Naive thymus-derived CD4-positive, alpha-beta T cell (primary cell): ENCODE measurements at regions of chr17 and their contacts with region 1.

Region 1: GRCh38 chr17:66301797-66302741 is at the start of gene PRKCA:
- DNase-seq: peak; percentile 59 to 85 (median 71)
- ATAC-seq: peak; percentile 91
- H3K4me3 ChIP-seq: peak within 1 kb of the TSS; percentile 61
- H3K4me3 Mint-ChIP-seq: peak within 1 kb of the TSS; percentile 96 to 100 (median 99)
- H3K27ac ChIP-seq: peak within 1 kb of the TSS; percentile 75
- H3K27ac Mint-ChIP-seq: peak within 1 kb of the TSS; percentile 92 to 98 (median 96)
- H3K4me1 ChIP-seq: peaks cover 7 to 21% of the 10 kb centered on the region in 2 donors
- H3K4me1 Mint-ChIP-seq: peaks cover 29 to 68% (median 59%) of the 10 kb centered on the region in 7 donors
- H3K27me3 ChIP-seq: no peaks in the 10 kb centered on the region
- H3K27me3 Mint-ChIP-seq: peaks cover 0 to 9% (median 0%) of the 10 kb centered on the region in 5 donors
- total RNA-seq, gene PRKCA: 94.1 to 186 (median 154) TPM

Region 2: GRCh38 chr17:65561394-65562205 is 740.5 kb before region 1 on chr17 and contains the start of gene AXIN2:
- CTCF ChIA-PET with region 1: no interaction called
- POLR2A ChIA-PET with region 1: no interaction called
- intact Hi-C with region 1: loop called in 1 of 2 experiments (anchors 5 kb)
- DNase-seq: peak; percentile 70 to 91 (median 88)
- ATAC-seq: peak; percentile 91
- H3K4me3 ChIP-seq: peak within 1 kb of the TSS; percentile 70
- H3K4me3 Mint-ChIP-seq: peak within 1 kb of the TSS in 8 of 10 donors; percentile 79 to 94 (median 87)
- H3K27ac ChIP-seq: peak within 1 kb of the TSS; percentile 92
- H3K27ac Mint-ChIP-seq: peak within 1 kb of the TSS; percentile 70 to 93 (median 90)
- H3K4me1 ChIP-seq: peaks cover 18 to 24% of the 10 kb centered on the region in 2 donors
- H3K4me1 Mint-ChIP-seq: peaks cover 10 to 37% (median 31%) of the 10 kb centered on the region in 7 donors
- H3K27me3 ChIP-seq: no peaks in the 10 kb centered on the region
- H3K27me3 Mint-ChIP-seq: peaks cover 0 to 22% (median 0%) of the 10 kb centered on the region in 5 donors
- total RNA-seq, gene AXIN2: 7.4 to 63.4 (median 39.5) TPM

Region 3: GRCh38 chr17:66200685-66201092 is 101.4 kb before region 1 on chr17:
- CTCF ChIA-PET with region 1: interaction called, 3 read pairs
- POLR2A ChIA-PET with region 1: no interaction called
- intact Hi-C with region 1: loop called in 1 of 2 experiments (anchors 5 kb)
- DNase-seq: peak in 7 of 9 donors; percentile 20 to 57 (median 55)
- ATAC-seq: peak; percentile 66
- H3K4me3 ChIP-seq: no peak overlapping the region
- H3K4me3 Mint-ChIP-seq: peak overlapping the region in 6 of 10 donors; percentile 21 to 66 (median 44)
- H3K27ac ChIP-seq: no peak overlapping the region
- H3K27ac Mint-ChIP-seq: peak overlapping the region in 8 of 9 donors; percentile 25 to 89 (median 69)
- H3K4me1 ChIP-seq: peaks cover 0 to 17% of the 10 kb centered on the region in 2 donors
- H3K4me1 Mint-ChIP-seq: peaks cover 12 to 26% (median 21%) of the 10 kb centered on the region in 7 donors
- H3K27me3 ChIP-seq: no peaks in the 10 kb centered on the region
- H3K27me3 Mint-ChIP-seq: peaks cover 0 to 4% (median 0%) of the 10 kb centered on the region in 5 donors

Region 4: GRCh38 chr17:66290101-66290722 is 11.9 kb before region 1 on chr17:
- CTCF ChIA-PET with region 1: interaction called, 3 read pairs
- POLR2A ChIA-PET with region 1: interaction called, 22 read pairs
- intact Hi-C with region 1: loop called in 1 of 2 experiments (anchors 1 kb)
- DNase-seq: no peak
- ATAC-seq: no peak
- H3K4me3 ChIP-seq: no peak overlapping the region
- H3K4me3 Mint-ChIP-seq: peak overlapping the region in 2 of 10 donors; percentile 11 to 59
- H3K27ac ChIP-seq: no peak overlapping the region
- H3K27ac Mint-ChIP-seq: peak overlapping the region in 1 of 9 donors; percentile 63
- H3K4me1 ChIP-seq: peaks cover 6 to 30% of the 10 kb centered on the region in 2 donors
- H3K4me1 Mint-ChIP-seq: peaks cover 18 to 51% (median 34%) of the 10 kb centered on the region in 7 donors
- H3K27me3 ChIP-seq: no peaks in the 10 kb centered on the region
- H3K27me3 Mint-ChIP-seq: no peaks in the 10 kb centered on the region

Region 5: DNA sequence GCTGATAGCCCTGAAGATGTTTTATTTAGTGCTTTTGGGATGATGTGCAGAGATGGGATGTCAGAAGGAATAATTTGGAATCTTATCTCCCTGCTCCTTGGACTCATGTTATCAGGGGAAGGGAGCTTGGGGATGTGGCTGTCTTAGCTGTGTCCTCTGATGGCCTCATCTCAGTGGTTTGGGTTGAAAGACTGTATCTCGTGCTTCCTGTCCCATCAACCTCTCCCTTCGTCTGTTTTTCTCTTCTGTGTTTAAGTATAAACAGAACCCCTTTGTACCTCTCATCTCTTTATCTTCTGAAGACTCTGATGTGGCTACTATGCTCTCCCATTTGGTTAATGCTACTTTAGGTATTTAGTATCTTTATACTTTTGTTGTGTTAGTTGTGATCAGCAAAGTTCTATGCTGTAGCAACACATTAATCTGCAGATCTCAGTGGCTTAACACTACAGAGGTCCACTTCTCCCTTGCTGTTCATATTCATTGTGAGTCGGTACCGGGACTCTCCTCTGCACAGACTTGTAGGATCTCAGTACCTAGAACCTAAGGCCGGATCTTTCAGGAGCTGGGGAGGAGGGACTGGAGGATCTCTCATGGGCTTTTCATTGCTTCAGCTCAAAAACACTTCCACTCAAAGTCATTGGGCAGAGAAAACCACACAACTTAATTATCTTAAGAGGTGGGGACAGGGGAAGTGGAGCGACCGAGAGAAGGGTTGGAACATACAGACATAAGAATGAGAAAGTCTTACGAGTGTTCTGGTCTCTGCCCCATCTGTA is 29.2 kb after region 1 on chr17:
- CTCF ChIA-PET with region 1: interaction called, 6 read pairs
- POLR2A ChIA-PET with region 1: interaction called, 22 read pairs
- intact Hi-C with region 1: loop called (anchors 1 kb)
- DNase-seq: peak in 8 of 9 donors; percentile 32 to 88 (median 76)
- ATAC-seq: peak; percentile 91
- H3K4me3 ChIP-seq: peak overlapping the region; percentile 6
- H3K4me3 Mint-ChIP-seq: peak overlapping the region; percentile 68 to 92 (median 83)
- H3K27ac ChIP-seq: peak overlapping the region; percentile 69
- H3K27ac Mint-ChIP-seq: peak overlapping the region; percentile 88 to 99 (median 95)
- H3K4me1 ChIP-seq: peaks cover 0 to 91% of the 10 kb centered on the region in 2 donors
- H3K4me1 Mint-ChIP-seq: peaks cover 43 to 92% (median 81%) of the 10 kb centered on the region in 7 donors
- H3K27me3 ChIP-seq: no peaks in the 10 kb centered on the region
- H3K27me3 Mint-ChIP-seq: no peaks in the 10 kb centered on the region

Region 6: GRCh38 chr17:66403846-66404556 is 101.9 kb after region 1 on chr17:
- CTCF ChIA-PET with region 1: interaction called, 8 read pairs
- POLR2A ChIA-PET with region 1: interaction called, 4 read pairs
- intact Hi-C with region 1: loop called (anchors 2 kb)
- DNase-seq: peak in 2 of 9 donors; percentile 20
- ATAC-seq: no peak
- H3K4me3 ChIP-seq: no peak overlapping the region
- H3K4me3 Mint-ChIP-seq: peak overlapping the region; percentile 67 to 85 (median 72)
- H3K27ac ChIP-seq: peak overlapping the region; percentile 14
- H3K27ac Mint-ChIP-seq: peak overlapping the region; percentile 58 to 97 (median 89)
- H3K4me1 ChIP-seq: peaks cover 14 to 82% of the 10 kb centered on the region in 2 donors
- H3K4me1 Mint-ChIP-seq: peaks cover 69 to 96% (median 90%) of the 10 kb centered on the region in 7 donors
- H3K27me3 ChIP-seq: no peaks in the 10 kb centered on the region
- H3K27me3 Mint-ChIP-seq: no peaks in the 10 kb centered on the region

Region 7: GRCh38 chr17:66567234-66568170 is 265.4 kb after region 1 on chr17:
- CTCF ChIA-PET with region 1: interaction called, 3 read pairs
- POLR2A ChIA-PET with region 1: no interaction called
- intact Hi-C with region 1: loop called in 1 of 2 experiments (anchors 5 kb)
- DNase-seq: peak; percentile 30 to 76 (median 65)
- ATAC-seq: peak; percentile 87
- H3K4me3 ChIP-seq: no peak overlapping the region
- H3K4me3 Mint-ChIP-seq: no peak overlapping the region
- H3K27ac ChIP-seq: no peak overlapping the region
- H3K27ac Mint-ChIP-seq: peak overlapping the region in 7 of 9 donors; percentile 3 to 87 (median 23)
- H3K4me1 ChIP-seq: peaks cover 0 to 14% of the 10 kb centered on the region in 2 donors
- H3K4me1 Mint-ChIP-seq: peaks cover 17 to 56% (median 51%) of the 10 kb centered on the region in 7 donors
- H3K27me3 ChIP-seq: no peaks in the 10 kb centered on the region
- H3K27me3 Mint-ChIP-seq: no peaks in the 10 kb centered on the region